GM10248 (cell line): ENCODE measurements at regions of chr16 and their contacts with region 1.

Region 1: GRCh38 chr16:29790183-29790952 is at the start of gene KIF22:
- DNase-seq: peak; percentile 100
- CTCF ChIP-seq: peak; percentile 66

Region 2: DNA sequence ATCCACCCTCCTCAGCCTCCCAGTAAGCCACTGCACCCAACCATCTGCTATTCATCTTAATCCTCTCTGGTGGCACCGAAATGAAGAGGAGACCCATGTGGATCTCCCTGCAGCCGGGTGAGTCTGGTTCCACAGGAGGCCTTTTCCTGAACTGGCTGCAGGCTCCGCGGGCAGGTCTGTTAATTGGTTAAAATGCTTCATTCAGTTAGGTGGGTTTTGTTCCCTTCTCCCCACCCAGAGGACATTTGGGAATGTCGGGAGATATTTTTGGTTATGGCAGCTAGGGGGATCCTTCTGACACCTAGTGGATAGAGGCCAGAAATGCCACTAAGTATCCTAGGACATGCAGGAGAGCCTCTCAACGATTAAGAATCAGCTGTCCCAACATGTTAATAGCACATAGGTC is 61.2 kb before region 1 on chr16:
- CTCF ChIA-PET with region 1: interaction called, 10 read pairs
- POLR2A ChIA-PET with region 1: interaction called, 3 read pairs
- DNase-seq: no peak
- CTCF ChIP-seq: peak; percentile 44

Region 3: DNA sequence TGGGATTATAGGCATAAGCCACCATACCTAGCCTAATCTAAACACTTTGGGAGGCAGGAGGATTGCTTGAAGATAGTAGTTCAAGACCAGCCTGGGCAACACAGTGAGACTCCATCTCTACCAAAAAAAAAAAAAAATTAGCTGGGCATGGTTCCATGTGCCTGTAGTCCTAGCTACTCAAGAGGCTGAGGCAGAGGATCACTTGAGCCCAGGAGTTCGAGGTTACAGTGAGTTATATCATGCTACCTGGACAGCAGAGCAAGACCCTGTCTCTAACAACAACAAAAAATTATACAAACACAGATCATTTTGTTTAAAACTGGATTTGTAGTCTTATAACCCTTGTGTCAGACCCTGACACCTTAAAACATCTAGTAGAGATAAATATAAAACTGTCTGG is 36.9 kb before region 1 on chr16:
- CTCF ChIA-PET with region 1: interaction called, 10 read pairs
- POLR2A ChIA-PET with region 1: interaction called, 4 read pairs
- DNase-seq: no peak
- CTCF ChIP-seq: no peak

Region 4: DNA sequence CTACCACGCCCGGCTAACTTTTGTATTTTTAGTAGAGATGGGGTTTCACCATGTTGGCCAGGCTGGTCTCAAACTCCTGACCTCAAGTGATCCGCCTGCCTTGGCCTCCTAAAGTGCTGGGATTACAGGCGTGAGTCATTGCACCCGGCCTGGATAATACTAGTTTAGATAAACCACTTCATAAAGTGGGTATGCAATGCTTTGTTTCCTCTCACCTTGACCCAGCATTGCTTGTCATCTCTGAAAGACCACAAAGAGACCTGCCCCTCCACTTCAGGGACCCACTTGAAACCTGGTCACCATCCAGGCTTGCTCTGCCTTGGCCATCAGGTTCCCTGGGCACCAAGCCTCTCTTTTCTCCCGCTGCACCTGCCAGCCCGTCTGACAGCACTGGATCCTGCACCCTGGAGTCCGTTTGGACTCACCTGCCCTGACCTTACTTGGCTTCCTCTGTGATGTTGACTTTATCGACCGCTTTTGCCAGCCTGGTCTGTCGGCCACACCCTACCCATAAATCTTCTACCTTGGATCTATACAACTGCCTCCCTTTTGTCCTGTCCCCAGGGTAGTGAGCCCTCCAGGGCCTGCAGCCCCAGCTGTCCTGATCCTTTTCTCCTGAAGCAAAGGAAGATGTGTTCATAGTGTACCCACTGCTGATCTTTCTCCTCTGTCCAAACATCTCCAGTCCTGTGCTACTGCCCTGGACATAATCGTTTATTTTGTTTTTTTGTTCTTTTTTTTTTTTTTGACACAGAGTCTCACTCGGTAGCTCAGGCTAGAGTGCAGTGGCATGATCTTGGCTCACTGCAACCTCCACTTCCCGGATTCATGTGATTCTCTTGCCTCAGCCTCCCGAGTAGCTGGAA is 25.0 kb before region 1 on chr16:
- CTCF ChIA-PET with region 1: interaction called, 18 read pairs
- POLR2A ChIA-PET with region 1: no interaction called
- DNase-seq: no peak
- CTCF ChIP-seq: no peak

Region 5: DNA sequence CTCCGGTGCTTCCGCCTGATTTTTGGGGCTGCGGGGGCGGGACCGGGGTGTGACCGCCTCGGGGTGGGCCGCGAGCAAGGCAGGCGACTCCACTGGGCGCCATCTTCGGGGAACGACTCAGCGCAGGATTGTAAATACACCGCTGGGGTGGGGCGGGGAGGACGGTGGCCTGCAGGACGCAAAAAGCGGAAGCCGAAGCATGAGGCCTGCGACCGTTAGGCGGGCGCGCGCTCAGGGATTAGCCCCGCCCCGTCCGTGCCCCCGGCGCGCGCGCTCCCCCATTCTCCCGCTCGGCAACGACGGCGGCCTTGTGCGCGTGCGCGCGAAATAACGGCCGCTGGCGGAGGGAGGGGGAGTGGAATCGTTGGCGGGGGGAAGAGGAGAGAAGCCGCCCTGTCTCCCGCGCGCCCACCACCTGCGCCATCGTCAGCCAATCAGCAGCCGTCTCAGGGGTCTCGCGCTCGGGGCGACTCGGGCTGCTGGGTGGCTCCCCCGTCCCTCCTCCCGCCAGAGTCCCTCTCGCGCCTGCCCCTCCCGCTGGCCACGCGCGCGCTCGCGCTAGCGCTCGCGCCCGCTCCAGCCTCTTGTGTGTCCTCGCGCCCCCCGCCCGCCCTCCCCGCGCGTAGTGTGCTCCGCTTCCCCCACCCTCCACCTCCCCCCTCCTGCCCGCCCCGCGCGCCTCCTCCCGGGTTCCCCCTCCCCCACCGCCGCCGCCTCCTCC is 15.2 kb after region 1 on chr16:
- CTCF ChIA-PET with region 1: interaction called, 41 read pairs
- POLR2A ChIA-PET with region 1: interaction called, 4 read pairs
- DNase-seq: peak; percentile 94
- CTCF ChIP-seq: no peak